MCF 10A (cell line): ENCODE measurements at regions of chr20 and their contacts with region 1.

Region 1: DNA sequence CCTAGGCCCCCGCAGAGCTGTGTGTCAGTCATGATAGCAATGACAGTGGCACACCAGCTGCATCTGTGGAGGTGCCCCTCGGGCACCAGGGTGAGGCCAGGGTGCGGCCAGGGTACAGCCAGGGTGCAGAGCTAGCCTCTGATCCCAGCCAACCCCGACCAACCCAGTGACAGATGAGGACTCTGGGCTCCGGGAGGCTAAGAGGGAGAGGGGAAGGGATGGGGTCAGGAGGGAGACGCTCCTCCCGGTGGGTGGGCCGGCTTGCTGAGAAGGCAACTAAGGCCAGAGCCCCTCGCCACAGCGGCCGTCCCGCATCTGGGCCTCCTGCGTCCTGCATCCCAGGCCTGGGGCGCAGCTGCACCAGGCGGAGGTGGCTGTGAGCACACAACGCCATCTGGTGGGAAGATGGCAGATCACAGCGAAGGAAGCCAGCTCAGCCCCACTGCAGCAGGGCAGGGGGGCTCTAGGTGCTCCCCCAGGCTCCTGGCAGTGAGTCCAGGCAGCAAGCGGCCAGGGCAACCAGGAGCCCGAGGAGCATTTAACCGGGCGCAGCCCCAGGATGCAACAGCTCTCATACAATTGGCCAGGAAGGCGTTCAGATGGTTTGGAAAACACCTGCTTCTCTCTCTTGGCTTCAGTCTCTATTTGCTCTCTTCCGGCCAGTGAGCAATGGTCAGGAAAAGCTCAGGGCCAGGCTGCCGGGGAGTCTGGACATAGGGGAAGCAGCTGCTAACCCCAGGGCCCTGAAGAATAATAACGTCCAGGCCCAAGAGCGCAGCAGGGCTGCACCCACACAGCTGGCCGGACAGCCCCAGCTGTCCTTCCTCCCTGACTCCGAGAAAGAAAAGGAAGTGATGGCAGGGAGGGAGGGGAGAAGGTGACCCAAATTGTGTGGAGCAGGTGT is 169.4 kb downstream of the TAF4 start:
- DNase-seq: peak; percentile 49
- H3K4me3 Mint-ChIP-seq: no peak overlapping the region
- H3K27ac Mint-ChIP-seq: no peak overlapping the region
- H3K4me1 Mint-ChIP-seq: no peaks in the 10 kb centered on the region
- H3K27me3 Mint-ChIP-seq: no peaks in the 10 kb centered on the region
- CTCF ChIP-seq: peak; percentile 62

Region 2: DNA sequence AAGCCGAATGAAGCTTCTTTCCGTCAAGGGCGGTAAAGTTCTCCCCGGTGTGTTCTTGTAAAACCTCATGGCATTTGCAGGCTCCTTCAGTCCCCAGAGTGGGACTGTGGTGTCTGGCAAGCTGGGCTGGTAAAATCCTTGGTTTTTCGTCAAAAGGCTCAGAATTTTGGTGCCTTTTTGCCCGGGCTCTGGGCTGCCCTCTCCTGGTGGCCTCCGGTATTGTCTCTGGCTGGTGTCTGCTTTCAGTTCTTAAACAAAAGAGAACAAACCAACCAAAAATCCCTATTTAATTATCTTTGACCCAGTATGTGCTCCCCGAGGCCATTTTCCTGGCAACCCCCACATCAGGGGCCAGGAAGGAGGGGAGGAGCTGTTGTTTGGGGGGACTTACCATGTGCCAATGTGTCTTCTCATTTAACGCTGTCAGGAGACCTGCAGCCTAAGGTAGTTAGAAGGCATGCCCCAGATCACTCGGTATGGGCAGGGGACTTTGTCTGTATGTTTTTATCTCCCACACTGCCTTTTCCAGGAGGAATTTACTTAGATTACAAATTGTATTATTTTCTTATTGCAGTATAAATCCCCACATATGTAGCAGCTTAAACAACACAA is 633.1 kb before region 1 on chr20:
- CTCF ChIA-PET with region 1: interaction called, 10 read pairs
- POLR2A ChIA-PET with region 1: no interaction called
- intact Hi-C with region 1: no loop called
- DNase-seq: peak; percentile 18
- H3K4me3 Mint-ChIP-seq: no peak overlapping the region
- H3K27ac Mint-ChIP-seq: no peak overlapping the region
- H3K4me1 Mint-ChIP-seq: no peaks in the 10 kb centered on the region
- H3K27me3 Mint-ChIP-seq: no peaks in the 10 kb centered on the region
- CTCF ChIP-seq: peak; percentile 78

Region 3: DNA sequence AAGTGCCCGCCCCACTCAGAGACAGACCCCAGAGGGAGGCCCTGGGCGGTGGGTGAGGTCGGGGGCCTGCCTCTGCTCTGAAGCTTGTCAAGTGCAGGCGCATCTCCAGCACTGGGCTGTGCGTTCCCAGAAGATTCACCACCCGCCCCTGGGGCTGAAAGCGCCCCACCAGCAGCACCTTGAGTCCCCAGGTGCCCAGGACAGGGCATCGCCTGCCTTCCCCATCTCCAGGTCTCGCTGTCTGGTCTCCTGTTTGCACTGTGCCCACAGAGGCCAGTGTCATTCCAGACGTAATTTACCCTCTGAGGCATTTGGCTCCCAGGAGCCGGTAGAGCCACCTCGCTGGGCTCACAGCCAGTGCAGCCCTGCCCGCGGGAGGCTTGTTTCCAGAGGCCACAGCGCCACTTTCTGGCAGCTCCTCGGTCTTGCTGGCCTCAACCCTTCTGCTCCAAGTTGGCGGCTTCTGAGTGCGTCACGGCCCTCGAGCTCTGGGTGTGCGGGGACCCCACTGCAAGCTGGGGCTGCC is 21.7 kb before region 1 on chr20:
- CTCF ChIA-PET with region 1: interaction called, 11 read pairs
- POLR2A ChIA-PET with region 1: no interaction called
- intact Hi-C with region 1: no loop called
- DNase-seq: peak; percentile 11
- H3K4me3 Mint-ChIP-seq: no peak overlapping the region
- H3K27ac Mint-ChIP-seq: no peak overlapping the region
- H3K4me1 Mint-ChIP-seq: no peaks in the 10 kb centered on the region
- H3K27me3 Mint-ChIP-seq: no peaks in the 10 kb centered on the region
- CTCF ChIP-seq: peak; percentile 30

Region 4: GRCh38 chr20:61909821-61910220 is 13.5 kb after region 1 on chr20:
- CTCF ChIA-PET with region 1: interaction called, 16 read pairs
- POLR2A ChIA-PET with region 1: no interaction called
- intact Hi-C with region 1: no loop called
- DNase-seq: no peak
- H3K4me3 Mint-ChIP-seq: no peak overlapping the region
- H3K27ac Mint-ChIP-seq: no peak overlapping the region
- H3K4me1 Mint-ChIP-seq: no peaks in the 10 kb centered on the region
- H3K27me3 Mint-ChIP-seq: no peaks in the 10 kb centered on the region
- CTCF ChIP-seq: no peak

Region 5: DNA sequence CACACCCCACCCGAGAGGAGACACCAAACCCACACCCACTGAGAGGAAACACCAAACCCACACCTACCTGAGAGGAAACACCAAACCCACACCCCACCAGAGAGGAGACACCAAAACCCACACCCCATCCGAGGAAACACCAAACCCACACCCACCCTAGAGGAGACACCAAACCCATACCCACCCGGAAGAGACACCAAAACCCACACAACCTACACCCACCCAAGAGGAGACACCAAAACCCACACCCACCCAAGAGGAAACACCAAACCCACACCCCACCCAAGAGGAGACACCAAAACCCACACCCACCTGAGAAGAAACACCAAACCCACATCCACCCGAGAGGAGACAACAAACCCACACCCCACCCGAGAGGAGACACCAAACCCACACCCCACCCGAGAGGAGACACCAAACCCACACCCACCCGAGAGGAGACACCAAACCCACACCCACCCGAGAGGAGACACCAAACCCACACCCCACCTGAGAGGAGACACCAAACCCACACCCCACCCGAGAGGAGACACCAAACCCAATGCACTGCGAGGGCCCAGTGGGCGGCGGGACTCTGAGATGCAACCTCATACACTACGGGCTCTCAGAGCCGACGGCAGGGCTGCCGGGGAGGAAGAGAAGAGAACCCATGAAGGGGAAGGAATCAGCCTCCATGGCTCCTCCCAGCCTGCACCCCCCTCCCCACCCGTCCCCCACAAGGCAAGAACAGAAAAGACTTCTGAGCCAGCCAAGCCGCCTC is 86.1 kb after region 1 on chr20:
- CTCF ChIA-PET with region 1: no interaction called
- POLR2A ChIA-PET with region 1: no interaction called
- intact Hi-C with region 1: no loop called
- DNase-seq: no peak
- H3K4me3 Mint-ChIP-seq: no peak overlapping the region
- H3K27ac Mint-ChIP-seq: no peak overlapping the region
- H3K4me1 Mint-ChIP-seq: no peaks in the 10 kb centered on the region
- H3K27me3 Mint-ChIP-seq: no peaks in the 10 kb centered on the region
- CTCF ChIP-seq: no peak

Region 6: GRCh38 chr20:62177307-62177706 is 281.0 kb after region 1 on chr20:
- CTCF ChIA-PET with region 1: no interaction called
- POLR2A ChIA-PET with region 1: no interaction called
- intact Hi-C with region 1: no loop called
- DNase-seq: no peak
- H3K4me3 Mint-ChIP-seq: no peak overlapping the region
- H3K27ac Mint-ChIP-seq: no peak overlapping the region
- H3K4me1 Mint-ChIP-seq: no peaks in the 10 kb centered on the region
- H3K27me3 Mint-ChIP-seq: no peaks in the 10 kb centered on the region
- CTCF ChIP-seq: no peak

Region 7: DNA sequence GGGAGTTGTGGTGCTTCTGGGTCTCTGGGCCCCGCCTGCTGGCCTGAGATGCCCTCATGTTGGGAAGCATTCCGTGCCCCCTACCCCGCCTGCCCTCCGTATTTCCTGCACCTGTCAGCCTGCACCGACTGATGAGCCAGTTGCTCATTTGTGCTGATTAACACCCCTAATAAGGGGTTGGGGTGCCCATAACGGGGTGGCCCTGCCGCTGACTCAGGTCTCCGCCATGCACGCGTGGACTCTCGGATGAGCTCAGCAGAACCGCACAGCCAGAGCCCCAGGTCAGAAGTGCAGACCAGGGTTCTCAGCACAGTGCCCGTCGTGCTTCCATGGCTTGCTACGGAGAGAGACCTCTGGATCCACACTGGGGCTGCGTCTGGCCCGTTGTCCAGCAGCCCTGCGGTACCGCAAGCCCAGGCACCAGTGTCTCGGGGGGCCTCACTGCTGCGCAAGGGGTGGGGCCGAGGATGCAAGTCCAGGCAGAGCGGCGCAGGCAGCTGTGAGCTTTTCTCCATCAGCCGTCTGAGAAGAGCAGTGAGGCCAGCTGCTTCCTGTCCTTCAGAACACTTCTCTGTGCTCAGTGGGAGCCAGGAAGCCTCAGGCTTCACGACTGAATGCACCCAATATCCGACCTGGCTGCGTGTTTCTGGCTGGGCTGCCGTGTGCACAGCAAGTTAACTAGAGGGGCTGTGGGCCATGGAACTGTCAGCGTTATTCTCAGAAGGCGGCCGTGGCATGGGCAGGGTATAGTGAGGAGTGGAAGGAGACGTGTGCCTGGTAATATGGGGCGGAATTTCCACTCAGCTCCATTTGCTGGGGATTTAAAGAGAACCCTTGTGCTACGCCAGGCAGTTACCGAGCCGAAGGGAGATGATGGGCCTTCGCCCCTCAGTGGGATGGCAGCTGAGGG is 305.1 kb after region 1 on chr20:
- CTCF ChIA-PET with region 1: no interaction called
- POLR2A ChIA-PET with region 1: no interaction called
- intact Hi-C with region 1: no loop called
- DNase-seq: no peak
- H3K4me3 Mint-ChIP-seq: no peak overlapping the region
- H3K27ac Mint-ChIP-seq: no peak overlapping the region
- H3K4me1 Mint-ChIP-seq: no peaks in the 10 kb centered on the region
- H3K27me3 Mint-ChIP-seq: no peaks in the 10 kb centered on the region
- CTCF ChIP-seq: no peak